GM23248 (cell line): ENCODE measurements at regions of chr11 and their contacts with region 1.

Region 1: GRCh38 chr11:33362051-33362910 is 105.1 kb downstream of the HIPK3 start:
- DNase-seq: peak; percentile 72
- H3K4me3 ChIP-seq: no peak overlapping the region
- H3K27ac ChIP-seq: no peak overlapping the region
- H3K4me1 ChIP-seq: peaks cover 8% of the 10 kb centered on the region
- H3K27me3 ChIP-seq: no peaks in the 10 kb centered on the region

Region 2: GRCh38 chr11:33214187-33214586 is 148.1 kb before region 1 on chr11:
- in situ Hi-C with region 1: no loop called
- DNase-seq: peak; percentile 40
- H3K4me3 ChIP-seq: no peak overlapping the region
- H3K27ac ChIP-seq: no peak overlapping the region
- H3K4me1 ChIP-seq: no peaks in the 10 kb centered on the region
- H3K27me3 ChIP-seq: no peaks in the 10 kb centered on the region

Region 3: DNA sequence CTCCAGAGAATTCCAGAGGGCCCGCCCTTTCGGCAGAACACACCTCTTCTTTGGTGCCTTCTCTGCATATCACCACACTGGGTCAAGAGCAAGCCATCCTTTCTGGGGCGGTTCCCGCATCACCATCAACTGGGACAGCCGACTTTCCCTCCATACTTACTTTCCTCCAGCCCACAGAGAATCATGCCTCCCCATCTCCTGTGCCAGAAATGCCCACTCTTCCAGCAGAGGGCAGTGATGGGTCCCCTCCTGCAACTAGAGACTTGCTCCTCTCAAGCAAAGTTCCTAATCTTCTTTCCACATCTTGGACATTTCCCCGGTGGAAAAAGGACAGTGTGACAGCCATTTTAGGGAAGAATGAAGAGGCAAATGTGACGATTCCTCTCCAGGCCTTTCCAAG is 180.6 kb after region 1 on chr11:
- in situ Hi-C with region 1: no loop called
- DNase-seq: peak; percentile 49
- H3K4me3 ChIP-seq: no peak overlapping the region
- H3K27ac ChIP-seq: no peak overlapping the region
- H3K4me1 ChIP-seq: peaks cover 52% of the 10 kb centered on the region
- H3K27me3 ChIP-seq: no peaks in the 10 kb centered on the region

Region 4: GRCh38 chr11:33682446-33682845 is 320.2 kb after region 1 on chr11:
- in situ Hi-C with region 1: loop called (anchors 5 kb)
- DNase-seq: peak; percentile 38
- H3K4me3 ChIP-seq: no peak overlapping the region
- H3K27ac ChIP-seq: peak overlapping the region; percentile 12; the same call in 1 of the 2 replicates
- H3K4me1 ChIP-seq: peaks cover 19% of the 10 kb centered on the region
- H3K27me3 ChIP-seq: no peaks in the 10 kb centered on the region

Region 5: DNA sequence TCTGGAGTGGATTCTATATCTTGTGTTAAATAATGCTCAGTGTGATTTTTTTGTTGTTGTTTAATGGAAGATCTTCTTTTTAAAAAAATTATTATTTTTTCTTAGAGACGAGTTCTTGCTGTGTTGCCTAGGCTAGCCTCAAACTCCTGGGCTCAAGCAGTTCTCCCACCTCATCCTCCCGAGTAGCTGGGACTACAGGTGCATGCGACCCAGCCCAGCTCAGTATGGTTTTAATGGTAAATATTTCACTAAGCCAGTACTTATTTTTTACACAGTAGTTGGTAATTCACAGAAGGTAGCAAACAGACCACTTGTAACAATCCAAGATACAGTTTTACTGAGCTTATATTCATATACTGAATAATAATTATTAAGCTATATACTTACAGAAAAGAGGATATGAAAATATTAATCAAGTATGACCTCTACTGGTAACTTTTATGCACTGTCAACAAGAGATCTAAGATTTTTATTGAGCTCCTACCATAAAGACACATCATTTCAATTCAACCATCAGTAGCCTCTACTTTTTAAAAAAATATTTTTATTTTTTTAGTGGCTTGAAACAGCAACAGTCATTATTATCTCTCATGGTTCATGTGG is 380.1 kb after region 1 on chr11:
- in situ Hi-C with region 1: loop called (anchors 10 kb)
- DNase-seq: peak; percentile 40
- H3K4me3 ChIP-seq: no peak overlapping the region
- H3K27ac ChIP-seq: no peak overlapping the region
- H3K4me1 ChIP-seq: peaks cover 9% of the 10 kb centered on the region
- H3K27me3 ChIP-seq: no peaks in the 10 kb centered on the region

Region 6: DNA sequence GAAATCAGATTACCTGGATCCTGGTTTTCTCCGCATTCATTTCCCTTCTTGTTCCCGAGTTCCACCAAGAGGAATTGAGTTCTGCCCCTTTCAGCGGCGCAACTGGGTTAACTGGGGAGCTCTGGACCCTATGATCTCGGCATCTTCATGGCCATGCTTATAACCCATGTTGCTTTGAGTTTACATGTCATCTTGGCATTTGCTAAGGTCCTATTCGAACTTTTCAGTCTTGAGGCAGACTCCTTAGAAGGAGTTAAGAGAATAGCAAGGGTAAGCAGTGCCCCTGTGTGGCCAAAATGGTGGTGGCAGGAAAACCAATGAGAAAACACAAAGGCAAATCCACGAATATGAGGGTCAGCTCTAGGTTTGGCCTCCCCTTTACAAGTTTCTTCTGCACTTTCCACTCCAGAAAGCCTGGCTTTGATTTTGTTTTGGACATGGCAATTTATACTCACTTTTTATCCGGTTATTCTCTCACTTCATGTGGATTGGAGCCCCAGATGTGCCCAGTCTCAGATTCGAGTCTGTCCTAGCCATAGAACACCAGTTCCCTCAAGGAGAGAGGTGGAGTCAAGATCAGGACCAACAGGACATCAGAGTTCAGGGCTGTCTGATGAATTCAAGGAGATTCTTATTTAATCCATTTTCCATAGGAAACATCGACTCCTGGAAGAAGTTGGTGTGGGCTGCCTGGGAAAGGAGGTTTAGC is 467.3 kb after region 1 on chr11:
- in situ Hi-C with region 1: loop called (anchors 10 kb)
- DNase-seq: peak; percentile 84
- H3K4me3 ChIP-seq: peak overlapping the region; percentile 76
- H3K27ac ChIP-seq: no peak overlapping the region
- H3K4me1 ChIP-seq: no peaks in the 10 kb centered on the region
- H3K27me3 ChIP-seq: peaks cover under 1% of the 10 kb centered on the region; the same call in 1 of the 2 replicates